ENCODE measurements at regions of chr7 and their contacts with region 1.

Region 1: DNA sequence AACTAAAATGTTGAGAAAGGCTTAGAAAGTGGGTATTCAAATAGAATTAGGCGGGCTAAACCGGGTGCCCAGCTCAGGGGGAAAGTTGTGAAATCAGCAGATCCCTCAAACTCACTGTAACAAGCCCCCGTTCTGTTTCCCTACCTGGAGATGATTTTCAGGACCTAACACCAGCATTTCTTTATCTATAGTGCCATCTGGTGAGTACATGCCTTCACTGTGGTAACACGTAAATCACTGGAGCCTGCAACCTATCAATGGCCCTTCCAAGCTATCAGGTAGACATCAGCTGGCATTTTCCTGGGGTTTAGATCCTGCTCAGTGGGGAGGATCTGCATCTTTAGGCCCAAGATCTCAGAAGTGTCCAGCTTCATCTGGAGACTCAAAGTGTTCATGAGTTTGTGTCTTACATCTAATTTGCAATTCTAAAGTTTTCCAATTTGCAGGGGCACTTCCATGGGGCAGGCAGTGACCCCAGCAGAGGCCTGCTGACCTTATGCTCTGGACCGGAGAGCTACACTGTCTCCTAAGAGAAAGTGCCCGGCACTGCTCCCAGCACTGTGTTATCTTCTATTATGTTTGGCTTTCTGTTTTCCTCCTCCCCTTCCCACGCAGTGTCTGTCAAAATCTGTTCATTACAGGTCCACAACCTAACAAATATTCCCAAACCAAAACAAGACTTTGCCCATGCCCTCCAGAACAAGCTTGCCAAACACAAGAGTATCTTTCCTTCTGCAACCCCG is 132.5 kb downstream of the LSM5 start:
- DNase-seq: no peak
- H3K4me3 ChIP-seq: no peak overlapping the region
- H3K27ac ChIP-seq: no peak overlapping the region
- H3K4me1 ChIP-seq: no peaks in the 10 kb centered on the region
- H3K27me3 ChIP-seq: peaks cover 0 to 17% (median 0%) of the 10 kb centered on the region in 4 donors
- CTCF ChIP-seq: peak in 5 of 6 experiments; percentile 9 to 48 (median 21)
- POLR2A ChIP-seq: no peak

Region 2: GRCh38 chr7:32212321-32212720 is 145.4 kb before region 1 on chr7:
- intact Hi-C with region 1: loop called (anchors 5 kb)
- DNase-seq: no peak
- H3K4me3 ChIP-seq: no peak overlapping the region
- H3K27ac ChIP-seq: no peak overlapping the region
- H3K4me1 ChIP-seq: no peaks in the 10 kb centered on the region
- H3K27me3 ChIP-seq: no peaks in the 10 kb centered on the region
- CTCF ChIP-seq: no peak
- POLR2A ChIP-seq: no peak

Measured in esophagus squamous epithelium (tissue), 5 donors.